ENCODE measurements at regions of chr13 and their contacts with region 1.

Region 1: GRCh38 chr13:83765796-83766195 is 116.5 kb downstream of the SLITRK1 start:
- DNase-seq: peak in 1 of 10 donors; percentile 40

Region 2: GRCh38 chr13:83634601-83635000 is 131.2 kb before region 1 on chr13:
- intact Hi-C with region 1: loop called (anchors 10 kb)
- DNase-seq: peak in 1 of 10 donors; percentile 28

Region 3: DNA sequence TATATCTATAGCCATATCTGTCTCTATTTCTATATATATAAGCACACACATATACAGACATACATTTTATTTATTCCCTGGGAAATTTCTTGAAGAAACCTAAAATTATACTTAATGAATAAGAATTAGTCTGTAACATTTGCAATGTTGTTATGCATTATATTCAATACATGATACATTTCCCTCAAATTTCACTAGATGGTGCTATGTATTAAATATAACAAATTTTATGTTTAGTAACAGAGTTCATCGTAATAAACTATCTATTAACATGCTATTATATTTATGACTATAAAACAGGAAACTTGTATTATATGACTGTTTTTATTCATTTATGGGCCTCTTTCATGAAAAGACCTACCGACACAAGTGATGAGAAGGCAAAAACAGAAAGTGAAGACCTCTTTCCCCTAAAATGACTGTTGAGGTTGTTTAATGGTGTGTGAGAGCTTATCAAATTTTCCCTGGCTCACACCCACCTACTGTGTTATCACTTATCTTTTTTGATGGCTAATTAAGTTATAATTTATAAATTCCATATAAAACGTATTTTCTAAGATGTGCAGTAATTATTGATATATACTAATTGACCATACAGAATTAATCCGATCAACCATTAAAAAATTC is 1151.6 kb after region 1 on chr13:
- intact Hi-C with region 1: no loop called
- DNase-seq: no peak